Prostate gland (tissue), 2 donors: ENCODE measurements at regions of chr22 and their contacts with region 1.

Region 1: DNA sequence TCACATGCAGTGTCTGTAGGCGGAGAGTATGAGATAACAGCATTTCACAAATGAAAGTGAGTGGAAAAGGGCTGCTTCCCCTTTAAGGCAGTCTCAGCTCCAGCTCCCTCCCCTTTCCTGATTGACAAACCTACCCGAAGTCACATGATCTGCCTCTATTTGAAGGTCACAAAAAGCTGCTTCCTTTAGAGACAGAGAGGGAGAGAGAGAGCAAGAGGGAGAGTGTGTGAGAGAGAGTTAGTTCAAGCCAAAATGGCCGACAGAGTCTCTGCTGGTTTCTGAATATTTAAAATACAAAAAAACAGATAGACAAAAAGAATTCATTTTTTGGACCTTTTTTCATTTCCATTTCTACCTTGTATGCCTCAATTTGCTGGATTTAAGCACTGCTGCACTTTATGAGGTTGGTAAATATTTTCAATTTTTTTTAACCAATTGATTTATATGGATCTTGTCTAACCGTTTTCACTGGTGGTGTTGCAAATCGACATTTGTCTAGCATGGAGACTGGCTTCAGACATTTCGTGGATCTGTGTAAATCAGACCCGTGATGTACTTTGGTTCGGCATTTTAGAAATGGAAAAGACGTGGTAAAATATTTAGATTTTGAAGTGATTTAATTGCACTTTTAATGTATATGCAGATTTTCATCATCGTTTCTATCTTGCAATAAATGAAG is at the start of gene TNRC6B:
- DNase-seq: peak; percentile 92
- H3K4me3 ChIP-seq: peak within 1 kb of the TSS; percentile 48 to 50
- H3K27ac ChIP-seq: peak within 1 kb of the TSS; percentile 61 to 86
- H3K4me1 ChIP-seq: peaks cover 8% of the 10 kb centered on the region
- H3K27me3 ChIP-seq: no peaks in the 10 kb centered on the region
- CTCF ChIP-seq: peak in 1 of 4 experiments; percentile 14
- POLR2A ChIP-seq: peak; percentile 96
- total RNA-seq, gene TNRC6B: 43.8 to 118 TPM

Region 2: GRCh38 chr22:40044102-40044869 is 133.6 kb before region 1 on chr22:
- intact Hi-C with region 1: loop called (anchors 5 kb)
- DNase-seq: peak; percentile 99
- H3K4me3 ChIP-seq: peak overlapping the region; percentile 61 to 81
- H3K27ac ChIP-seq: peak overlapping the region; percentile 91 to 92
- H3K4me1 ChIP-seq: peaks cover 15% of the 10 kb centered on the region
- H3K27me3 ChIP-seq: no peaks in the 10 kb centered on the region
- CTCF ChIP-seq: peak in 1 of 4 experiments; percentile 15
- POLR2A ChIP-seq: peak; percentile 51

Region 3: DNA sequence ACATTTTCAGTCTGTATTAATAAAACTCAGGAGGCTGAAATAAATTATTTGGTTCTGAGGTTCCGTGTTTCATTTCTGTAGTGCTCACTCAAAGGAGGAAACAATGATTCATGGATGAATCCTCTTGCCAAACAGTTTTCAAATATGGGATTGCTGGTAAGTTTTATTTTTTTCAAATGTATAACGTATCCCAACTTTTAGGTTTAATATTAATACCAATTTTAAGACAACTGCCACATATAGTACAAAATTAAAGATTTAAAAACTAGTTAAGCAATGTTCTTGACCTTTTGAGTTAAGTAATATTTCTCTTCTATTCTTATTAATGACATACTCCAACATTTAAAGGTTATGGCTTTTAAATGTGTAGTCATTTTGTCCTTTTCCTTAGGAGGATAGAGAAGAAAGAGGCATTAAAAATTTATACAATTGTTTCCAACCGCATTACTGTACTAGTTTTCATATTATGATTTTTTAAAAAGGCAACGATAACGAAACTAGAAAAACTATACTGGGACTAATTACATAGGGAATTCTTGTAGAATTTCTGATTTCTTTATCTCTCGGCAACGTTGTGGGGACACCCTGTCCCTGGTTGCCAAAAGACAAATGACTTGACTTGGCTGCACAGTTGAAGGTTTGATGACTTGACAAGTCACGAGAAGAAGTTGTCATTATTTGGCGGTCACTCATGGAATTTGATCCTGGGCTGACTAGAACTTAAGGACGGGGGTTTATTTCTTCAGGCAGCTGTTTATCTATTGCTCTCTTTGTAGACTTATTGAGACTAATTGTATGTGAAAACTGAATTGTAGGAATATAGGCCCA is 99.3 kb after region 1 on chr22:
- intact Hi-C with region 1: loop called (anchors 10 kb)
- DNase-seq: no peak
- H3K4me3 ChIP-seq: peak overlapping the region; percentile 18 to 24
- H3K27ac ChIP-seq: peak overlapping the region; percentile 84 to 87
- H3K4me1 ChIP-seq: peaks cover 4% of the 10 kb centered on the region
- H3K27me3 ChIP-seq: no peaks in the 10 kb centered on the region
- CTCF ChIP-seq: no peak
- POLR2A ChIP-seq: no peak

Region 4: DNA sequence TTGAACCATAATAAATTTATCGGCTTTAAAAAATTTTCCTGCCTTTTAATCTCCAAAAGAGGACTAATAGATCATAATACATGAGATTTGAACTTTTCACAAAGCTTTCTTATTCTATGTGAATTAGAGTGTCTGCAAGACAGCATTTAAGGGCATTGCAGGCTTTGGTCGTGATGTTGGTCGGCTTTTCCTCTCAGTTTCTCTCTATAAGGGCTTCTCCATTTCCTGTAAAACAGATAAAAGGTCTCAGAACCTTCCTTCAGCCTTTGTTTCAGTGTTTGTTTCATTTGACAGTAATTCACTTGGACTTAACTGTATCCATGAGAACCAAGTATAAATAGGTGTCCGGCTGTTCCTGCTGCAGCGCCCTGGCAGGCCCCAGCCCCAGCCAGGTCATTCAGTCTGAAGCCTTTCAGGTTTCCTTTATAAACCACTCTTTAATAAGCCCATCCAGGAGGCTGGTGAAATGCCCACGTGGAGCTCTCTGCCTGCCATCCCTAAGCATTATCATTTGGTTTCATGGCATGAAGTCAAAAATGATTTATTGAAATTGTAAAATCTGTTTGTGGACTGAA is 131.2 kb after region 1 on chr22:
- intact Hi-C with region 1: loop called (anchors 5 kb)
- DNase-seq: no peak
- H3K4me3 ChIP-seq: no peak overlapping the region
- H3K27ac ChIP-seq: no peak overlapping the region
- H3K4me1 ChIP-seq: no peaks in the 10 kb centered on the region
- H3K27me3 ChIP-seq: no peaks in the 10 kb centered on the region
- CTCF ChIP-seq: no peak
- POLR2A ChIP-seq: no peak